ENCODE measurements at regions of chr6 and their contacts with region 1.

Region 1: GRCh38 chr6:168884646-168885086 is 369.0 kb downstream of the THBS2 start:
- DNase-seq: peak; percentile 73 to 88 (median 81)
- H3K4me3 ChIP-seq: peak overlapping the region; percentile 21
- H3K27ac ChIP-seq: no peak overlapping the region
- H3K4me1 ChIP-seq: peaks cover 2% of the 10 kb centered on the region
- H3K27me3 ChIP-seq: no peaks in the 10 kb centered on the region
- CTCF ChIP-seq: peak; percentile 91 to 96 (median 95)
- EP300 ChIP-seq: no peak
- POLR2A ChIP-seq: peak; percentile 12

Region 2: DNA sequence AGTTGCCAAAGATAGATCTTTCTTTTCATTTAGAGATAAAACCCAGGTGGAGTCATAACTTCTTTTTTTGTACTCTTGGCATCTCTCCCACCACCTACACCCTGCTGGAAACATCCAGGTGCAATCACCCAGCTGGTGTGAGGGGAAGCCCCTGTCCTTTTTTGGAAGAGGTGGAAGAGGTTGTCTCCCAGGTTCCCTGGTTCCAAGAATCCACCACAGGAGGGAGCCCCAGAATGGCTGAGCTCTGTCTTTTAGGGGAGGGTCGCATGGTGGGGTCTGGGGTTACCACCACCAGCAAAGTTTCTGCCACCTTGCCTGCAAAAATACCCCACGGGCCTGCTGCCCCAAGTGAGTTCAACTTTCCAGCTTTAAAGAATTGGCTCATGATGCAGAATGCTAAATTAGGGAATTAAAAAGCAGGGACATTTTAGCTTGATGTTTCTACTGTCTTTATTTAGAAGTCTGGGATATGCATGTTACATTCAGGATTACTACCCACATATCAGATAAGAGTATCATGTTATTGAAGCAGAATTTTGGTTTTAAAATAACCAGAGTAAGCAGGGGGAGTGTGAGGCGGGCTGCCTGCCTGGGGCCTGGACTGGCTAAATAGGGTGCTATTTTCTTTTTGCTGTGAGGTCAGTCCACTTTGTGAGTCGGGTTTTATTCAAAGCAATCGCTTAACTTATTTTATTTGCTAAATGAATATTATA is 432.7 kb before region 1 on chr6:
- intact Hi-C with region 1: loop called in 1 of 4 experiments (anchors 10 kb)
- DNase-seq: no peak
- H3K4me3 ChIP-seq: no peak overlapping the region
- H3K27ac ChIP-seq: no peak overlapping the region
- H3K4me1 ChIP-seq: peaks cover 27% of the 10 kb centered on the region
- H3K27me3 ChIP-seq: no peaks in the 10 kb centered on the region
- CTCF ChIP-seq: peak in 1 of 3 donors; percentile 24
- EP300 ChIP-seq: no peak
- POLR2A ChIP-seq: no peak

Region 3: GRCh38 chr6:168616816-168617765 is 267.6 kb before region 1 on chr6:
- intact Hi-C with region 1: loop called in 3 of 4 experiments (anchors 2 to 10 kb)
- DNase-seq: peak in 4 of 5 donors; percentile 39 to 60 (median 56)
- H3K4me3 ChIP-seq: no peak overlapping the region
- H3K27ac ChIP-seq: no peak overlapping the region
- H3K4me1 ChIP-seq: peaks cover 5% of the 10 kb centered on the region
- H3K27me3 ChIP-seq: no peaks in the 10 kb centered on the region
- CTCF ChIP-seq: peak; percentile 16 to 25 (median 23)
- EP300 ChIP-seq: no peak
- POLR2A ChIP-seq: no peak

Measured in ovary (tissue), 10 donors.